Transverse colon (tissue), 4 donors: ENCODE measurements at regions of chr20 and their contacts with region 1.

Region 1: GRCh38 chr20:16761305-16761829 is 13.2 kb downstream of the OTOR start:
- DNase-seq: peak; percentile 36
- H3K4me3 ChIP-seq: no peak overlapping the region
- H3K27ac ChIP-seq: no peak overlapping the region
- H3K4me1 ChIP-seq: peaks cover 0 to 4% (median 1%) of the 10 kb centered on the region in 4 donors
- H3K27me3 ChIP-seq: peaks cover 4% of the 10 kb centered on the region
- CTCF ChIP-seq: peak; percentile 58 to 76 (median 66)
- EP300 ChIP-seq: no peak
- POLR2A ChIP-seq: no peak

Region 2: GRCh38 chr20:15708984-15709598 is 1052.3 kb before region 1 on chr20:
- in situ Hi-C with region 1: loop called in 3 of 4 experiments (anchors 25 kb)
- intact Hi-C with region 1: no loop called
- DNase-seq: peak; percentile 51
- H3K4me3 ChIP-seq: no peak overlapping the region
- H3K27ac ChIP-seq: no peak overlapping the region
- H3K4me1 ChIP-seq: no peaks in the 10 kb centered on the region
- H3K27me3 ChIP-seq: no peaks in the 10 kb centered on the region
- CTCF ChIP-seq: peak; percentile 41 to 58 (median 44)
- EP300 ChIP-seq: no peak
- POLR2A ChIP-seq: no peak

Region 3: GRCh38 chr20:16517946-16518783 is 243.2 kb before region 1 on chr20:
- in situ Hi-C with region 1: loop called in 1 of 4 experiments (anchors 25 kb)
- intact Hi-C with region 1: no loop called
- DNase-seq: peak; percentile 45
- H3K4me3 ChIP-seq: no peak overlapping the region
- H3K27ac ChIP-seq: no peak overlapping the region
- H3K4me1 ChIP-seq: no peaks in the 10 kb centered on the region
- H3K27me3 ChIP-seq: no peaks in the 10 kb centered on the region
- CTCF ChIP-seq: peak; percentile 49 to 60 (median 54)
- EP300 ChIP-seq: no peak
- POLR2A ChIP-seq: no peak